Psoas muscle (tissue), 8 donors: ENCODE measurements at regions of chr10 and their contacts with region 1.

Region 1: GRCh38 chr10:22316285-22317120 is at the start of gene COMMD3:
- DNase-seq: peak; percentile 89 to 94
- ATAC-seq: peak; percentile 85 to 88 (median 86)
- H3K4me3 ChIP-seq: peak within 1 kb of the TSS; percentile 92
- H3K27ac ChIP-seq: peak within 1 kb of the TSS; percentile 95
- H3K4me1 ChIP-seq: peaks cover 28% of the 10 kb centered on the region
- H3K27me3 ChIP-seq: no peaks in the 10 kb centered on the region
- CTCF ChIP-seq: no peak
- total RNA-seq, gene COMMD3: 45.5 to 81.4 (median 64.8) TPM

Region 2: GRCh38 chr10:21533467-21534279 is 782.8 kb before region 1 on chr10 and contains the start of gene MLLT10:
- intact Hi-C with region 1: loop called (anchors 5 to 10 kb)
- DNase-seq: peak; percentile 97 to 98
- ATAC-seq: peak; percentile 86 to 98 (median 94)
- H3K4me3 ChIP-seq: peak within 1 kb of the TSS; percentile 84
- H3K27ac ChIP-seq: peak within 1 kb of the TSS; percentile 99
- H3K4me1 ChIP-seq: peaks cover 32% of the 10 kb centered on the region
- H3K27me3 ChIP-seq: no peaks in the 10 kb centered on the region
- CTCF ChIP-seq: peak; percentile 35
- total RNA-seq, gene MLLT10: 11.8 to 21.1 (median 16.9) TPM

Region 3: DNA sequence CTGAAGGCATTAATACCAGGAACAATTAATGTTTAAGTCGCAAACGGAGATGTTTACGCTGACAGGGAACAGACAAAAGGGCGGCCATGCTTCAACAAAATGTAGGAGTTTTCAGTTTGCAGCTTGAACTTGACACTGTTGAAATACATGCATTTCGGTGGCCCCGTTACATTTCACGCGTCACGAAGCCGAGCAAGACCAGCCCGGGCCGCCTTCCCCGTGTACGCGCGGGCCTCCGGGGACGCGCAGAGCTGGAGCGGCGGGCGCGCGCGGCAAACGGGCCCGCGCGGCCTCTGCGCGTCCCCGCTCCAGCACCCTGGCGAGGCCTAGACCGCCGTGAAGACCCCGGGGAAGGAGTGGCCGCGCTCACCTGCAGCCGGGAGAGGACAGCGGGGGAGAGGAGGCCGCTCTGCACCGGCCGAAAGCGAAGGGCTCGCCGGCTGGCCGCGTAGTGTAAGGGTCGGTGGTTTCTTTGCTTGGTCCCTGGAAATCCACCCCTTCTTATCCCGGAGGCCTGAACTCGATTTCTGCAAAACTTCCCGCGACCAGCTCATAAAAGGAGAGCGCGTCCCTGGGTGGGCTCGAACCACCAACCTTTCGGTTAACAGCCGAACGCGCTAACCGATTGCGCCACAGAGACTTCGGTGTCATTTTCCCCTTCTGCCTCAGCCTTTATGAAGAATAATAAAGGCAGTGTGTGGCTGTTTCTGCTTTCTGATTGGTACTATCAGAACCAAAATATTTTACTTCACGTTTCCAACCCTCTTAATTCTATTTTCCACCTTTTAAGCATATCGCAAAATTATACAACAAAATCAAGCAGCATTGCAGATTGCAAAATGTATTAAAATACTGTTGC is 87.3 kb before region 1 on chr10:
- intact Hi-C with region 1: loop called (anchors 2 to 5 kb)
- DNase-seq: peak; percentile 83 to 92
- ATAC-seq: peak; percentile 98 to 99 (median 98)
- H3K4me3 ChIP-seq: peak overlapping the region; percentile 82
- H3K27ac ChIP-seq: peak overlapping the region; percentile 91
- H3K4me1 ChIP-seq: no peaks in the 10 kb centered on the region
- H3K27me3 ChIP-seq: no peaks in the 10 kb centered on the region
- CTCF ChIP-seq: no peak

Region 4: DNA sequence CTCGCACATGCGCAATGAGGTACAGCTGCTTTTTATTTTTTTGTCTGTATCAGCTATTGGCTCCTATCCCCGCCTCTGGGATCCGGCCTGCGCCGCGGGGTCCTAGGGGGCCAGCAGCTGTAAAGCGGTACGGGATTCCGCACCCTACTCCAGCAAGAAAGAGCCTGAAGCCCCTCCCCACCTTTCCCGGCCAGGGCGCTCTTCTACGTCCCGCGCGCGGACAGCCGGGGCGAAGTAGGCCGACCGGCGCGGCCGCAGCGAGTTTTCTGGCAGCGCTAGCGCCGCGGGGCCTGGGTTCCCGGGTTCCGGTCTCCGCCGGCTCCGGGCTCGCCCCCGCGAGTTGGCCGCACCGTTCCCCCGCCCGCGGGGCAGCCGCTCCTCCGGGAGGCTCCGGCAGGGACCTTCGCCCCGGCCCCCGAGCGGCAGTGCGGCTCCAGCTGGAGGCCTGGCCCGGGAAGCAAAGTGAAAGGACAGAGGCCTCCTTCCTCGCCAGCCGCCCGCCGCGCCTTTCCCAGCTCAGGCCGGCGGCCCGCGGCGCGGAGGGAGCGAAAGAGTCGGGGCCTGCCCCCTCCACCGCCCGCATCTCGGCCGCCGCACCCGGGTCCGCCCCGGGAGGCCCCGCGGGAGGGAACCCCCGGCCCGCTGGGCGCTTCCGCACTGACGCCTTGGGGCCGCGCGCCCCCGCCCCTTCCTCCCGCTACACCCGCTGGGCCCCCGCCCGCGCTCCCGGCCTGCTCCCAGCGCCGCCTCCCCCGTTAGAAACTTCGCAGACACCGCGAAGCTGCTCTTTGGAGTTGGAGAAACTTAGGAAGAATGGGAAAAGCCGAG is 24.1 kb after region 1 on chr10:
- intact Hi-C with region 1: loop called in 1 of 2 experiments (anchors 1 kb)
- DNase-seq: peak; percentile 72 to 81
- ATAC-seq: peak; percentile 78 to 87 (median 83)
- H3K4me3 ChIP-seq: peak overlapping the region; percentile 94
- H3K27ac ChIP-seq: peak overlapping the region; percentile 99
- H3K4me1 ChIP-seq: peaks cover 31% of the 10 kb centered on the region
- H3K27me3 ChIP-seq: peaks cover 5 to 89% (median 28%) of the 10 kb centered on the region in 3 donors
- CTCF ChIP-seq: no peak

Region 5: GRCh38 chr10:22550732-22551131 is 234.2 kb after region 1 on chr10:
- intact Hi-C with region 1: loop called in 1 of 2 experiments (anchors 5 kb)
- DNase-seq: peak; percentile 28 to 71
- ATAC-seq: no peak
- H3K4me3 ChIP-seq: no peak overlapping the region
- H3K27ac ChIP-seq: no peak overlapping the region
- H3K4me1 ChIP-seq: peaks cover 31% of the 10 kb centered on the region
- H3K27me3 ChIP-seq: no peaks in the 10 kb centered on the region
- CTCF ChIP-seq: peak; percentile 38